ENCODE measurements at regions of chr16 and their contacts with region 1.

Region 1: GRCh38 chr16:46673320-46674013 is 15.5 kb downstream of the VPS35 start:
- DNase-seq: peak; percentile 62
- ATAC-seq: peak; percentile 100
- H3K4me3 Mint-ChIP-seq: no peak overlapping the region
- H3K27ac Mint-ChIP-seq: peak overlapping the region; percentile 3
- H3K4me1 Mint-ChIP-seq: no peaks in the 10 kb centered on the region
- H3K27me3 Mint-ChIP-seq: no peaks in the 10 kb centered on the region
- CTCF ChIP-seq: peak; percentile 87

Region 2: GRCh38 chr16:46629331-46630219 is 43.9 kb before region 1 on chr16:
- CTCF ChIA-PET with region 1: interaction called, 16 read pairs
- POLR2A ChIA-PET with region 1: interaction called, 5 read pairs
- DNase-seq: no peak
- ATAC-seq: peak; percentile 21
- H3K4me3 Mint-ChIP-seq: no peak overlapping the region
- H3K27ac Mint-ChIP-seq: peak overlapping the region; percentile 42
- H3K4me1 Mint-ChIP-seq: peaks cover 20% of the 10 kb centered on the region
- H3K27me3 Mint-ChIP-seq: peaks cover 5% of the 10 kb centered on the region; the same call in 1 of the 2 replicates
- CTCF ChIP-seq: no peak

Region 3: DNA sequence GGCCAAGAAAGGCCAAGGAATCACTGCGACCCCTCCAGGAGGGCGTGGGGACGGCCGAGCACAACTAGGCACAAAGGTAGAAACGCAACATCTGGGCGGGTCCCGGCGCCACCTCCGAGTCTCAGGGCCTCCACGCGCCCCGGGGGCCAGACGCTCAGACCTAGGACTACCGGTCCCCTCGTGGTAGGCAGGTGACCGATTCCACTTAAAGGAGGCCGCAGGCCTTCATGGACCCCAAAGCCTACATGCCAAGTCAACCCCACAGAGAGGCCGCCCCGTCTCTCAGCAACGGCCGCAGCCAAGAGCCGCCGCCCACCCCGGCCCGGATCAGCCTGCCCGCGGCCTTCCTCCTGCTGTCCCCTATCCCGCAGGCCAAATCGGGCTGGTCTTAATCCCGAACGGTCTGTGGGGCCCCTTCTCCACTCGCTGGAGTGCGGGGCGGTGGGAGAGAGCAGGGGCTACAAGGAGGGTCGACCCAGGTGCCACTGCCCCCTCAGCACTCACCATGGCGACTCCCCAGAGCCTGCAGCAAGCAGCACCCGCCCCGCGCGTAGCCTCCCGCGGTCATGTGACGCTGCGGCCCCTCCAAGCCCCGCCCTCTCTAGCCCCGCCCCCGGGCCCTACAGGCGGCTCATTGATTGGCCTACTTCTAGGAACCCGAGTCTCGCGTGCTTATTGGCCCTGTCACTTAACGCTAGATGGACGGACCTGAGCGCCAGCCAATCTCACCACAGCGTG is 15.3 kb after region 1 on chr16 and contains the start of gene VPS35:
- CTCF ChIA-PET with region 1: interaction called, 16 read pairs
- POLR2A ChIA-PET with region 1: no interaction called
- DNase-seq: peak; percentile 100
- ATAC-seq: peak; percentile 94
- H3K4me3 Mint-ChIP-seq: no peak within 1 kb of the TSS
- H3K27ac Mint-ChIP-seq: peak within 1 kb of the TSS; percentile 95
- H3K4me1 Mint-ChIP-seq: peaks cover 40% of the 10 kb centered on the region
- H3K27me3 Mint-ChIP-seq: no peaks in the 10 kb centered on the region
- CTCF ChIP-seq: 0 out of 2 replicates have a peak, but pooled peaks have one; percentile 3
- total RNA-seq, gene VPS35: 59.2 to 72.1 TPM (median 62.1 TPM) in 3 replicates

Region 4: DNA sequence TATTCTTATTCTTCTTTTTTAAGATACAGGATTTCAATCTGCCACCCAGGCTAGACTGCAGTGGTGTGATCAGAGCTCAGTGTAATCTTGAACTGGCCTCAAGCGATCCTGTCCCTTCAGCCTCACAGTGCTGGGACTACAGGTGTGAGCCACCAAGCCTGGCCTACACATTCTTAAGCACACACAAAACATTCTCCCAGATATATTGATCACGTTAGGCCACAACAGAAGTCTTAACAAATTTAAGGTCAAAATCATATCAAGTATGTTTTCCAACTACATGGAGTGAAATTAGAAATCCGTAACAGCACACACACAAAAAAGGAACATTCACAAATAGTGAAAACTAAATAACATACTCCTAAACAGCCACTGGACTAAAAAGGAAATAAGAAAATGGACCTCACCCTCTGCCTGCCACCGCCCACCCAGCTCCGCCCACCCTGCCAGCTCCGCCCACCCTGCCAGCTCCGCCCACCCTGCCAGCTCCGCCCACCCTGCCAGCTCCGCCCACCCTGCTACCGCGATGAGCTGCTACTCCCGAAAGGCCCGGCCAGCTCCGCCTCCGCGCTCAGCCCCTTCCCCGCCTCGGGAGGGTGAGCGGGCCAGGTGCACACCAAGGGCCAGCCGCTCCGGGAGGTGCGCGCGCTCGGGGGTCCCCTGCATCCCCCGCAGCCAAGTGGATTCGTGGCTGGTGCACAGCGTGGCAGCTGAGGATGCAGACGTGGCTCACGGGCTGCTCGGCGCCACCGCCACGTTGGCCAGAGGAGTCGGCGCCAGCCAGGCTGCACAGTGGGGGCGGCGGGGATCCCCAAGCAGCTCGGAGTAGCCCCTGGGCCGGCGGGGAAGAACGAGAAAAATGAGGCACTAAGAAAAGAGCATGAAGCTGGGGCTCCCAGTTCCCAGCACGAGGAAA is 116.3 kb after region 1 on chr16:
- CTCF ChIA-PET with region 1: interaction called, 11 read pairs
- POLR2A ChIA-PET with region 1: no interaction called
- DNase-seq: peak; percentile 86
- ATAC-seq: peak; percentile 94
- H3K4me3 Mint-ChIP-seq: peak overlapping the region; percentile 82
- H3K27ac Mint-ChIP-seq: peak overlapping the region; percentile 99
- H3K4me1 Mint-ChIP-seq: peaks cover 34% of the 10 kb centered on the region
- H3K27me3 Mint-ChIP-seq: peaks cover 2% of the 10 kb centered on the region; the same call in 1 of the 2 replicates
- CTCF ChIP-seq: no peak

Region 5: GRCh38 chr16:46801428-46802049 is 128.1 kb after region 1 on chr16:
- CTCF ChIA-PET with region 1: interaction called, 43 read pairs
- POLR2A ChIA-PET with region 1: no interaction called
- DNase-seq: no peak
- ATAC-seq: peak; percentile 41; the same call in 1 of the 2 replicates
- H3K4me3 Mint-ChIP-seq: no peak overlapping the region
- H3K27ac Mint-ChIP-seq: no peak overlapping the region
- H3K4me1 Mint-ChIP-seq: peaks cover 2% of the 10 kb centered on the region; the same call in 1 of the 2 replicates
- H3K27me3 Mint-ChIP-seq: no peaks in the 10 kb centered on the region
- CTCF ChIP-seq: no peak

Region 6: GRCh38 chr16:46908540-46909372 is 235.3 kb after region 1 on chr16:
- CTCF ChIA-PET with region 1: interaction called, 13 read pairs
- POLR2A ChIA-PET with region 1: no interaction called
- DNase-seq: peak; percentile 81
- ATAC-seq: peak; percentile 82
- H3K4me3 Mint-ChIP-seq: no peak overlapping the region
- H3K27ac Mint-ChIP-seq: peak overlapping the region; percentile 59
- H3K4me1 Mint-ChIP-seq: peaks cover 6% of the 10 kb centered on the region; the same call in 1 of the 2 replicates
- H3K27me3 Mint-ChIP-seq: no peaks in the 10 kb centered on the region
- CTCF ChIP-seq: peak; percentile 89